Posterior cingulate gyrus (tissue), 11 donors: ENCODE measurements at regions of chr7 and their contacts with region 1.

Region 1: GRCh38 chr7:77455324-77455723 is 39.2 kb upstream of the GSAP start:
- DNase-seq: peak in 8 of 10 donors; percentile 23 to 96 (median 56)

Region 2: DNA sequence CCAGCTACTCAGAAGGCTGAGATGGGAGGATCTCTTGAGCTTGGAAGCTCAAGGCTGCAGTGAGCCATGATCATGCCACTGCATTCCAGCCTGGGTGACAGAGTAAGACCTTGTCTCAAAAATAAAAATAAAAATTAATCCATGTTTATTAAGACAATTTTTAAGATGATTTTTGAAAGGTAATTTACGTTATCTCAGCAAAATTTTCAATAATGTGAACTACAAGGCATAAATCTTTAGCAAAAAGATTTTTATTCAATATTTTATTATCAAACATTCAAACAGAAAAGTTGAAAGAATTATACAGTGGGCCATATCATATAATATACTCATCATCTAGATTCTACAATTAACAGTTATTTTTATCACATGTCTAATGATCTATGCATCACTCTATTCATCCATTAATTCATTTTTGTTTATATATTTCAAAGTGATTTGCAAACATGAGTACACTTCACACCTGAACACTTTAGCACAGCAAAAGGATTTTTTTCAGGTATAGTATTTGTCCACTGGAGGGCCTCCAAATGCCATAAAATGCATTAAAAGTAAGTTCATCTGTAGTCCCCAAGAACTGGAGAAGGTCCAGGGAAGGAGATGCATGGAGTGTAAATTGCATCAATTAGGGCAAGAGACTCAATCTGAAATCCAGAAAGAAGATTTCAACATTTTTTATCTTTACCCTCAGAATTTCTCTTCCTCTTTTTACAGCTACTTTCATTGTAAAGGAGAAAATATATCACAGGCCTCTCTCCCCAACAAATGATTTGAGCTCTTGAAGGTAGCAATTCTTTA is 202.3 kb after region 1 on chr7:
- intact Hi-C with region 1: loop called (anchors 10 kb)
- DNase-seq: no peak

Region 3: DNA sequence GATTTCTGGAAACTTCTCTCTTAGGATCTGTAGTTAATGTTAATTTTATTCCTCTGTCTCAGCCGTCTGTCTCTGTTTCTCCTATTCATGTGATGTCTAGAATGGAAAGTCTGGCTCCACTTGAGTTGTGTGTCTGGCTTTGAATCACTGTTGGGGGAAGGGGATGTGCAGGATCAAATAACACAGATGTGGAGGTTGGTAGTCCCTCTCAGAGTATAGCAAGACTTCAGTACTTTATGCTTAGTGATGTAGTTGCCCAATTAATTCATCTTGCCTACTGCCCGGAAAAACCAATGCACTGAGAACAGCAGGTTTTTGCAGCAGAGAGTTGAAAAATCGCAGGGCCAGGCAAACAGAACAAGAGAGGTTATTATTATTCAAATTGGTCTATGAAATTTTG is 422.5 kb after region 1 on chr7:
- intact Hi-C with region 1: no loop called
- DNase-seq: no peak

Region 4: GRCh38 chr7:78115876-78116275 is 660.6 kb after region 1 on chr7:
- intact Hi-C with region 1: no loop called
- DNase-seq: no peak